Mammary epithelial cell (primary cell): ENCODE measurements at regions of chr15 and their contacts with region 1.

Region 1: DNA sequence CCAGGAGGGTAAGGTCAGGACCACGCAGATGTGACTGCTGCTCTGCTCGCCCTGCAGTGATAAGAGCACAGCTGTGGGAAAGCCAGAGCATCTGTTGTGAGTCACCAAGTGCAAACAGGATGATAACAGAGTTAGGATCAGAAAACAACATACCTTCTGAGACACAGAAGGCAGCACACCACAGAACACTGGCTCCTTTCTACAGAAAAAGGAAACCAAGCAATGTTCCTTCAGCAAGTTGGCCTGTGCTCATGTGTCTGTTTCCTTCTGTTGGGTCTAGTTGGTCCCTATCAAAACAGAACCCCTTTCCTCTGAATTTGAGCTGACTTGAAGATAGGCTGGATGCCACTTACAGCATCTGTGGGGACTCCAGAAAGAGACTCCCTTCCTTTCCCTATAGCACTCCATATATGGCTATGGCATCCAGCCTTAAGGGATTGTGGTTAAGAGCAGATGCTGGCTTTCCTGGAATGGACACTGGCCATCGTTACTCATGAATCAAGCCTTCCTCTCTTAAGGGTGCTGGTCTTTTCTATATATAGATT is 440.7 kb upstream of the THBS1 start:
- DNase-seq: peak; percentile 71
- H3K4me3 ChIP-seq: no peak overlapping the region
- H3K27ac ChIP-seq: peak overlapping the region; percentile 40
- H3K4me1 ChIP-seq: peaks cover 23% of the 10 kb centered on the region
- H3K27me3 ChIP-seq: no peaks in the 10 kb centered on the region
- CTCF ChIP-seq: no peak

Region 2: DNA sequence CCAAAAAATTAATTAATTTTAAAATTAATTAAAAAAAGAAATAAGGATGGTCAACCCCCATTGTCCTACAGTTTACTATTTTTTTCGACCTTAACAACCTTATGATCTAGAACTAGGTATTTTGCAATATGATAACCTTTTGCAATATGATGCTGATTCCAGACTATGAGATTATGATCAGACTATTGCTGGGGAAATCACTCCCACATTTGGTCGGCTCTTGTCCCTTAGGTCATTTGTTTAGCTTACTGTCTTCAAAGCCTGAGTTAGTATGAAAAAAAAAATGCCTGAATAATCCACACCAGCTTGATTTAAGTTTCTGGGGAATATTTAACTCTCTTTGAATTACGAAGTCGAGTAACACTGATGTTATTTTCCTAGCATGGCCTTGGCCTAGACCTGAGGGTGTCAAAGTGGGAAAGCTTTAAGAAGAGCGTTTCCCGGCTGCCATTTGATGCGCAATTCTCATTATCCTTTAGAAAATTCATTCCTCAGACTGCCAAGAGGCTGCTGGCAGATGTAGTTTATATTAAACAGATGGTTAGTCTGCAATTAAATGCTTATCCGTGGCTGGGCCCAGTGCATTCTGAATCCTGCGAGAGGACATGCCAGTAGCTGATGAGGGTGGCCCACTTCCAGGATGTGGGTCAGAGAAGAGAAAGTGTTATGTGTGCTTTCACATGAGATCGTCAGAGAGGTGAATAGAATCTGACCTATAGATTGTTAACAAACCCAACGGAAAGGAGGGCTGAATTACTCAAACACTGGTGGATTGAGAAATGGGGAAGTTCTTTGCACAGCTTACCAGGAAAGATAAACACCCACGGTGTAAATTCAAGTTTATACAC is 55.2 kb before region 1 on chr15:
- CTCF ChIA-PET with region 1: no interaction called
- dilution Hi-C with region 1: no loop called
- in situ Hi-C with region 1: no loop called
- intact Hi-C with region 1: no loop called
- DNase-seq: peak; percentile 69
- H3K4me3 ChIP-seq: no peak overlapping the region
- H3K27ac ChIP-seq: no peak overlapping the region
- H3K4me1 ChIP-seq: no peaks in the 10 kb centered on the region
- H3K27me3 ChIP-seq: no peaks in the 10 kb centered on the region
- CTCF ChIP-seq: no peak

Region 3: DNA sequence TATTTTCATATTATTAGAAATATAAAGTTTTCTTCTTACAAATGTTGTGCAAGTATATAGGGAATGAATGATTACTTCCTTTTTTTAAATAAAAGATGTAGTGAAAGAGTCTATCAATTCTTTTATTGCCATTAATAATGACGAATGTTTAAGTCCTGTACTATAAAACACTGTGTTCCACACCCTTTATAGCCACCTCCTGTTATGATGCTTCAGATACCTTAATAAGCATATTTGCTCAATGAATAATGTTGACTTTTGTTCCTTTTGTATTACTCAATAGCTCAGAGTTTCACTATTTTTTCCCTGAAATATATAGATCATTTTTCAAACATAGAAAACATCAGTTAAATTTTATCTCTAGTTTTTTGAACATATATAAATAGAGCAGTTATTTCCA is 62.5 kb after region 1 on chr15:
- CTCF ChIA-PET with region 1: no interaction called
- dilution Hi-C with region 1: no loop called
- in situ Hi-C with region 1: no loop called
- intact Hi-C with region 1: no loop called
- DNase-seq: peak; percentile 64
- H3K4me3 ChIP-seq: no peak overlapping the region
- H3K27ac ChIP-seq: peak overlapping the region; percentile 99
- H3K4me1 ChIP-seq: peaks cover 47% of the 10 kb centered on the region
- H3K27me3 ChIP-seq: no peaks in the 10 kb centered on the region
- CTCF ChIP-seq: no peak

Region 4: DNA sequence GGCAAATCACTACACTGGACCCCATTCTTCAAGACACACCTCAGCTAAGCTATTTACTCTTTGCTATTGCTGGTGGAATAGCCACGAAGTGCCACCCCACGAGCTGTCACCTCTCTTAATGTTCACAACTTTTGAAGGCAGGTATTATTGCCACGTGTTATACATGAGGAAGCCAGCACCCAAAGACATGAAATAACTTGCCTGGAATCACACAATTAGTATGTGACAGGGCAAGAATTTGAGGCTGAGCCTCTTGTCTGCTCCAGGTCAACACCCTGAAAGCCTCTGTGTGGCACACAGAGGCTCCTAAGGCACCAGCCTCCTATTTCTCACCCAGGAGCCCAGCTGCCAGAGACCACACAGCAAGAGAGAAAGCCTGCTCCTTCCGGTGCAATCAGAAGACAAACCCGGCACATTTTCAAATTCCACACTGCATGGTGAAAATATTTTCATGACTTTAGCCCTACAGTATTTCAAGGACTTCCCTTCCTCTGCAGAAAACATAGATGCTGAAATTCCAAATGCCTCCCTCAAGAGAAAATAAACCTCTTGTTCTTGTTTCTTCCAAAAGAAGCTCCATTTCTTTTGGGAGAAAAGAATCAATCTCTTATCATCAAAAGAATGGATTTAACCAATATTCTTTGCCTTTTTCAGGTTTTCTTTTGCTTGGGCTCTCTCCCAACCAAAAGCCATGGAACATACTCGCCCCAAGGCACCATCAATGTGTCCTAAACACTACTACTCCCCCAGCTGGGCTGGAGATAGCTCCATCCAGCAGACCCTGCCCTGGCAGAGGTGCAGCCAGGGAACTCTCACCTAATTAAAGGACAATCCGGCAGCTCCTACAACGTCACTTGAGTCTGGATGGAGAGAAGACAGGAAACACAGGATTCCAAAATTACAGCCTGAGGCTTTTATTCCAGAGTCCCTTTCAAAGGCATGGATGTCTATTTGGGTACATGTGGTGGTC is 356.0 kb after region 1 on chr15:
- CTCF ChIA-PET with region 1: interaction called, 14 read pairs
- dilution Hi-C with region 1: no loop called
- in situ Hi-C with region 1: no loop called
- intact Hi-C with region 1: no loop called
- DNase-seq: peak; percentile 44
- H3K4me3 ChIP-seq: no peak overlapping the region
- H3K27ac ChIP-seq: no peak overlapping the region
- H3K4me1 ChIP-seq: peaks cover 17% of the 10 kb centered on the region
- H3K27me3 ChIP-seq: no peaks in the 10 kb centered on the region
- CTCF ChIP-seq: no peak